ENCODE measurements at regions of chr21 and their contacts with region 1.

Region 1: GRCh38 chr21:36718951-36719501 is 20.1 kb downstream of the SIM2 start:
- DNase-seq: peak in 1 of 2 experiments; percentile 64
- H3K4me3 ChIP-seq: no peak overlapping the region
- H3K27ac ChIP-seq: no peak overlapping the region
- H3K4me1 ChIP-seq: no peaks in the 10 kb centered on the region
- H3K27me3 ChIP-seq: no peaks in the 10 kb centered on the region
- CTCF ChIP-seq: no peak

Region 2: DNA sequence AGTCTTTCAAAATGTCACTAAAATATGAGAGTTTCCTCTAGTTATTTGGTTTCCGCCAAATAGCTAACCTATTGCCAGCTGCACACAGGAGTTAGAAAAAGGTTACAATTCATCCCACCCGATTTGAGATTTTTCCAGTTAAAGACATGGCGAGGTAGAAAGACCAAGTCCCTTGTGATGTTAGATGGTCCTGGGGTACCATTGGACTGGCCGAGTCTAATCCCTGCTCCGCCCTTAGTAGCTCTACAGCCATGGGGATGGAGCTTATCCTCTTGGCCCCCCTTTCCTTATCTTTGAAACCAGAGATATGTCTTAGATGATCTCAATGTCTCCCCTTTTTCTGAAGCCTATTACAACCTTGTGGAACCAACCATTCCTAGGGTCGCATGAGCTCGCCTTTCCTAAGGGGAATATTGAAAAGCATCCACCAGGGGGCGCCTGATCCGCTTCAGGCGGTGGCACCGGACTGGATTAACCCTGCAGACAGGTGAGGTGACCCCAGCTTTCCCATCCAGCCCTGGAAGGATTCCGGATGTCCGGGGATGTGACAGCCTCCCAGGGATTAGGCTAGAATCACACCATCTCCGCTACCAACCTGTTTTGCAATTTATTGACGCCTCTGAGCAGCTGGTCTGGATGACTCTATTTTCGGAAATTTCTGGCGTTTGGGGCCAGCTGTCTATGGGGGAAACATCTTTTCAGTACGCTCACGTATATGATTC is 88.4 kb before region 1 on chr21:
- CTCF ChIA-PET with region 1: interaction called, 4 read pairs
- POLR2A ChIA-PET with region 1: no interaction called
- intact Hi-C with region 1: loop called (anchors 1 kb)
- DNase-seq: peak; percentile 43 to 61
- H3K4me3 ChIP-seq: no peak overlapping the region
- H3K27ac ChIP-seq: no peak overlapping the region
- H3K4me1 ChIP-seq: peaks cover 30% of the 10 kb centered on the region
- H3K27me3 ChIP-seq: no peaks in the 10 kb centered on the region
- CTCF ChIP-seq: peak; percentile 81

Region 3: DNA sequence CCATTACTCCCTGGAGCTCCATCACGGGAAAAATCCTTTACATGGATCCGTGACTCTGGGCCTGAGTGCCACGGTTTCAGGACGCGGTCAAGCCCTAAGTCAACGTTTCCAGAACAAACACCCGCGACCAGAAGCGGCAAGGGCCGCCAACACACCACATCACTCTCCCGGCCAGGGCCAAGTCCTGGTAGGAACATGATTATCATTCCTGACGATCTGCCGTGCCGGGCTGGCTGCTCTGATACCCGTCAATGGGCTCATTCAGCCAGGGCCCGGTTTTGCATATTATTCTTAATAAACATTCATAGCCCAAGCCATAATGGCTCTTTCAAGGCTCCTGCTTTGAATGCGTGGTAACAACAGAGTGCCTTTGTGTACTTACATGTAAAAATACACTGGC is 64.7 kb before region 1 on chr21:
- CTCF ChIA-PET with region 1: no interaction called
- POLR2A ChIA-PET with region 1: no interaction called
- intact Hi-C with region 1: no loop called
- DNase-seq: no peak
- H3K4me3 ChIP-seq: no peak overlapping the region
- H3K27ac ChIP-seq: no peak overlapping the region
- H3K4me1 ChIP-seq: peaks cover 39% of the 10 kb centered on the region
- H3K27me3 ChIP-seq: no peaks in the 10 kb centered on the region
- CTCF ChIP-seq: no peak

Region 4: DNA sequence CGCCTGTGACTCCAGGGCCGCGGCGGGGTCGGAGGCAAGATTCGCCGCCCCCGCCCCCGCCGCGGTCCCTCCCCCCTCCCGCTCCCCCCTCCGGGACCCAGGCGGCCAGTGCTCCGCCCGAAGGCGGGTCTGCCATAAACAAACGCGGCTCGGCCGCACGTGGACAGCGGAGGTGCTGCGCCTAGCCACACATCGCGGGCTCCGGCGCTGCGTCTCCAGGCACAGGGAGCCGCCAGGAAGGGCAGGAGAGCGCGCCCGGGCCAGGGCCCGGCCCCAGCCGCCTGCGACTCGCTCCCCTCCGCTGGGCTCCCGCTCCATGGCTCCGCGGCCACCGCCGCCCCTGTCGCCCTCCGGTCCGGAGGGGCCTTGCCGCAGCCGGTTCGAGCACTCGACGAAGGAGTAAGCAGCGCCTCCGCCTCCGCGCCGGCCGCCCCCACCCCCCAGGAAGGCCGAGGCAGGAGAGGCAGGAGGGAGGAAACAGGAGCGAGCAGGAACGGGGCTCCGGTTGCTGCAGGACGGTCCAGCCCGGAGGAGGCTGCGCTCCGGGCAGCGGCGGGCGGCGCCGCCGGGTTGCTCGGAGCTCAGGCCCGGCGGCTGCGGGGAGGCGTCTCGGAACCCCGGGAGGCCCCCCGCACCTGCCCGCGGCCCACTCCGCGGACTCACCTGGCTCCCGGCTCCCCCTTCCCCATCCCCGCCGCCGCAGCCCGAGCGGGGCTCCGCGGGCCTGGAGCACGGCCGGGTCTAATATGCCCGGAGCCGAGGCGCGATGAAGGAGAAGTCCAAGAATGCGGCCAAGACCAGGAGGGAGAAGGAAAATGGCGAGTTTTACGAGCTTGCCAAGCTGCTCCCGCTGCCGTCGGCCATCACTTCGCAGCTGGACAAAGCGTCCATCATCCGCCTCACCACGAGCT is 19.8 kb before region 1 on chr21 and contains the start of gene SIM2:
- CTCF ChIA-PET with region 1: no interaction called
- POLR2A ChIA-PET with region 1: interaction called, 5 read pairs
- intact Hi-C with region 1: loop called (anchors 1 kb)
- DNase-seq: peak; percentile 60 to 83
- H3K4me3 ChIP-seq: peak within 1 kb of the TSS; percentile 87
- H3K27ac ChIP-seq: peak within 1 kb of the TSS; percentile 64
- H3K4me1 ChIP-seq: 0 out of 2 replicates have a peak, but pooled peaks cover 14% of the 10 kb centered on the region
- H3K27me3 ChIP-seq: no peaks in the 10 kb centered on the region
- CTCF ChIP-seq: no peak
- total RNA-seq, gene SIM2: 17.9 and 18.5 TPM in 2 replicates

Region 5: DNA sequence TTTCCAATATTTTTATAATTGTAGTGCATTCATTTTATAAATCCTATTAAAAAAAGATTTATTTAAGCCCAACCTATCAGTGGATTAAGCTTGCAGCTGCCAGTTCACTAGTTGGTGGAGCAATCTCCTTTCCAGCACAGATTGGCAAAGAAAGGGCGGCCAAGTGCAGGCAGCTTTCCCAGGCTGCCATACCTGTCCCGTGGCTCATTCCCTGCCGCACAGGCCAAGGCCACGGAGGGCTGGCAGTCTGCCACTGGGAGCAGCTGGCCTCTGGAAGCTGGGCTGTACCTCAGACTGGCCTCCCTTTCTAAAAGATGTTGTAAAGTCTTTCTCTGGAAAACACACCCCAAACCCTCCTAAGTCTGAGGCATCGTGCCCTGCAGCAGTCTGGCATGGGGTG is 54.1 kb after region 1 on chr21:
- CTCF ChIA-PET with region 1: no interaction called
- POLR2A ChIA-PET with region 1: interaction called, 18 read pairs
- intact Hi-C with region 1: no loop called
- DNase-seq: peak; percentile 68 to 82
- H3K4me3 ChIP-seq: no peak overlapping the region
- H3K27ac ChIP-seq: no peak overlapping the region
- H3K4me1 ChIP-seq: no peaks in the 10 kb centered on the region
- H3K27me3 ChIP-seq: no peaks in the 10 kb centered on the region
- CTCF ChIP-seq: no peak

Region 6: GRCh38 chr21:37045149-37045548 is 326.1 kb after region 1 on chr21:
- CTCF ChIA-PET with region 1: no interaction called
- POLR2A ChIA-PET with region 1: no interaction called
- intact Hi-C with region 1: no loop called
- DNase-seq: no peak
- H3K4me3 ChIP-seq: no peak overlapping the region
- H3K27ac ChIP-seq: no peak overlapping the region
- H3K4me1 ChIP-seq: peaks cover 20% of the 10 kb centered on the region
- H3K27me3 ChIP-seq: no peaks in the 10 kb centered on the region
- CTCF ChIP-seq: no peak